Right ventricle myocardium inferior (tissue), 1 donor: ENCODE measurements at regions of chr3 and their contacts with region 1.

Region 1: GRCh38 chr3:63993653-63994079 is 29.6 kb downstream of the PSMD6 start:
- DNase-seq: peak; percentile 70
- ATAC-seq: peak; percentile 88

Region 2: GRCh38 chr3:63961891-63962290 is 31.8 kb before region 1 on chr3:
- intact Hi-C with region 1: loop called (anchors 2 kb)
- DNase-seq: no peak
- ATAC-seq: no peak

Region 3: GRCh38 chr3:64030741-64031140 is 37.1 kb after region 1 on chr3:
- intact Hi-C with region 1: no loop called
- DNase-seq: peak; percentile 82
- ATAC-seq: peak; percentile 88

Region 4: DNA sequence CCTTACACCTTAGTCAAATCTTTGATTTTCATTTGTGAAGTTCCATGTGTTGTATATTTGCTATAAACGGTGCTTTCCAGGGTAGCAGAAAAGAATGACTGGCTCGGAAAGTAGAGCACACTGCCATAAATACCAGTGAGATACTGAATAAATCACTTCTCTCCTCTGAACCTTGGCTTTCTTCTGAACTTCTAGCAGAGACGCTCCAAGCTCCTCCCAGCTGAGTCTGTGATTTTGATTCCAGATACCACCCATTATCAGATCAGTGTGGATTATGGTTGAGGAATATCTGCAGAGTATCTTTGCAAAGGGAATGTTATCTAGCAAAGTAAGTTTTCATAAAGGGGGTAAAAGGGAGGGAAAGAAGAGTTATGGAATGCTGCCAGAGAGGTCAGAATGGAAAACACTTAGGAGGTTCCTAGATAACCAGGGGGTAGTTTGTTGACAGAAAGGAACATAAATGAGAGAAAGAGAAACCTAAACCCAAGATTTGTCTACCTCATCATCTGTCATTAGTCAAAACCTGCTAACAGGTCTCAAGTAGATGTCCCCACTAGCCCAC is 128.2 kb after region 1 on chr3:
- intact Hi-C with region 1: no loop called
- DNase-seq: no peak
- ATAC-seq: no peak